HEK293 (cell line): ENCODE measurements at regions of chr5 and their contacts with region 1.

Region 1: DNA sequence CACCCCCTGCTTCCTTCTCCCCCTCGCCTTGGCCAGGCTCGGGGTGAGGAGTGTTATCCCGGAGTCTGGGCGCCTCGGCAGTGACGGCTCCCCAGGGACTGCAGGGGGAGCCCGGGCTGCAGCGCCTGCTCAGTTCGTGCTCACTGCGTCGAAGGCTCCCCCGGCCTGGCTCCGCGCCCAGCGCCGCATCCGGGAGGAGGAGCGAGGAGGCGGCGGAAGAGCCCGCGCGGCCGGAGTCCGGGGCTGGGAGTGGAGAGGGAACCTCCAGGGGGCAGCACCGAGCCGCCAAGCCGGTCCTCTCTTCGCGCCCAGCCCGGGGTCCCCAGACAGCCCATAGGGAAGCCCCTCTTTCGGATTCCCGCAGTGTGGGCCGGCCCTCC is 1.3 kb upstream of the EGR1 start:
- H3K4me3 ChIP-seq: peak overlapping the region; percentile 88
- H3K27ac ChIP-seq: peak overlapping the region; percentile 94
- H3K4me1 ChIP-seq: peaks cover 4% of the 10 kb centered on the region; the same call in 1 of the 2 replicates
- CTCF ChIP-seq: peak; percentile 97

Region 2: GRCh38 chr5:138230261-138230660 is 233.7 kb before region 1 on chr5:
- CTCF ChIA-PET with region 1: no interaction called
- POLR2A ChIA-PET with region 1: no interaction called
- H3K4me3 ChIP-seq: no peak overlapping the region
- H3K27ac ChIP-seq: no peak overlapping the region
- H3K4me1 ChIP-seq: peaks cover 18% of the 10 kb centered on the region
- CTCF ChIP-seq: no peak

Region 3: GRCh38 chr5:138438724-138439476 is 25.1 kb before region 1 on chr5 and contains the start of gene REEP2:
- CTCF ChIA-PET with region 1: interaction called, 5 read pairs
- POLR2A ChIA-PET with region 1: interaction called, 13 read pairs
- H3K4me3 ChIP-seq: peak within 1 kb of the TSS; percentile 60
- H3K27ac ChIP-seq: peak within 1 kb of the TSS; percentile 68; the same call in 1 of the 2 replicates
- H3K4me1 ChIP-seq: peaks cover 8% of the 10 kb centered on the region; the same call in 1 of the 2 replicates
- CTCF ChIP-seq: no peak